Thyroid gland (tissue), 4 donors: ENCODE measurements at regions of chr13 and their contacts with region 1.

Region 1: GRCh38 chr13:110644892-110645521 is 29.7 kb downstream of the NAXD start:
- DNase-seq: peak; percentile 58 to 78
- H3K4me3 ChIP-seq: no peak overlapping the region
- H3K27ac ChIP-seq: no peak overlapping the region
- H3K4me1 ChIP-seq: peaks cover 0 to 7% of the 10 kb centered on the region in 2 donors
- H3K27me3 ChIP-seq: no peaks in the 10 kb centered on the region
- CTCF ChIP-seq: peak in 4 of 6 experiments; percentile 3 to 36 (median 18)
- POLR2A ChIP-seq: no peak

Region 2: GRCh38 chr13:110705826-110706569 is 61.0 kb after region 1 on chr13 and contains the start of gene CARS2:
- intact Hi-C with region 1: loop called (anchors 10 kb)
- DNase-seq: peak; percentile 96 to 97
- H3K4me3 ChIP-seq: peak within 1 kb of the TSS; percentile 45 to 67 (median 64)
- H3K27ac ChIP-seq: peak within 1 kb of the TSS in 2 of 3 donors; percentile 46 to 57
- H3K4me1 ChIP-seq: peaks cover 14 to 21% of the 10 kb centered on the region in 2 donors
- H3K27me3 ChIP-seq: no peaks in the 10 kb centered on the region
- CTCF ChIP-seq: peak in 2 of 6 experiments; percentile 16 to 30
- POLR2A ChIP-seq: peak in 1 of 2 donors; percentile 88
- total RNA-seq, gene CARS2: 49.0 to 78.1 (median 68.4) TPM

Region 3: GRCh38 chr13:110971486-110971885 is 326.5 kb after region 1 on chr13:
- intact Hi-C with region 1: no loop called
- DNase-seq: no peak
- H3K4me3 ChIP-seq: no peak overlapping the region
- H3K27ac ChIP-seq: no peak overlapping the region
- H3K4me1 ChIP-seq: no peaks in the 10 kb centered on the region
- H3K27me3 ChIP-seq: no peaks in the 10 kb centered on the region
- CTCF ChIP-seq: no peak
- POLR2A ChIP-seq: no peak

Region 4: GRCh38 chr13:111076156-111077013 is 431.4 kb after region 1 on chr13:
- intact Hi-C with region 1: no loop called
- DNase-seq: no peak
- H3K4me3 ChIP-seq: no peak overlapping the region
- H3K27ac ChIP-seq: no peak overlapping the region
- H3K4me1 ChIP-seq: no peaks in the 10 kb centered on the region
- H3K27me3 ChIP-seq: no peaks in the 10 kb centered on the region
- CTCF ChIP-seq: no peak
- POLR2A ChIP-seq: no peak